ENCODE measurements at regions of chr11 and their contacts with region 1.

Region 1: GRCh38 chr11:128713595-128713994 is 19.7 kb downstream of the FLI1 start:
- DNase-seq: peak; percentile 65
- ATAC-seq: peak; percentile 55
- H3K4me3 ChIP-seq: no peak overlapping the region
- H3K4me3 Mint-ChIP-seq: peak overlapping the region; percentile 69
- H3K27ac ChIP-seq: peak overlapping the region; percentile 54 to 88
- H3K27ac Mint-ChIP-seq: peak overlapping the region; percentile 90
- H3K4me1 ChIP-seq: peaks cover 88% of the 10 kb centered on the region in 2 donors
- H3K4me1 Mint-ChIP-seq: peaks cover 91% of the 10 kb centered on the region
- H3K27me3 ChIP-seq: no peaks in the 10 kb centered on the region
- H3K27me3 Mint-ChIP-seq: no peaks in the 10 kb centered on the region
- CTCF ChIP-seq: no peak

Region 2: DNA sequence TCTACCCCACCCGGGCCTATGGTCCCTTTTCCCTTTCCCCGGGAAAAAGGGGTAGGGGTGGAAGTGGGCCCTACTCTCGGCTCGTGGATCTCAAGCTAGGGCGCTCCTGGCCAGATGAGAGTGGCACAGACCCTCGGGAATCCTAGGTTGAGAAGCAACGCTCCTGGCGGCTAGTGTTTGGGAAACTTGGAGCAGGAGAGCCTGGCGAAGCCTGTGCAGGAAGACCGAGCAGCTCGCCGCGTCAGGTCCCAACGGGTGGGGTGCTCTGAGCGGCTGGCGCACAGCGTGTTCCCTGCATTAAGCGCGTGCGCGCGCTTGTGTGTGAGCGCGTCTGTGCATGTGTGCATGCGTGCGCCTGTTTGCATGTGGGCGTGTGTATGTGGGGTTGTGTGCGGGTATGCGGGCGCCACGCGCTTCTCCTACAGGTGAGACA is 26.8 kb before region 1 on chr11:
- CTCF ChIA-PET with region 1: no interaction called
- POLR2A ChIA-PET with region 1: interaction called, 12 read pairs
- intact Hi-C with region 1: no loop called
- DNase-seq: peak; percentile 71
- ATAC-seq: peak; percentile 72
- H3K4me3 ChIP-seq: peak overlapping the region; percentile 9 to 79 (median 55)
- H3K4me3 Mint-ChIP-seq: peak overlapping the region; percentile 96
- H3K27ac ChIP-seq: no peak overlapping the region
- H3K27ac Mint-ChIP-seq: peak overlapping the region; percentile 32
- H3K4me1 ChIP-seq: peaks cover 36 to 37% of the 10 kb centered on the region in 2 donors
- H3K4me1 Mint-ChIP-seq: peaks cover 48% of the 10 kb centered on the region
- H3K27me3 ChIP-seq: peaks cover 0 to 43% (median 21%) of the 10 kb centered on the region in 4 experiments
- H3K27me3 Mint-ChIP-seq: peaks cover 38% of the 10 kb centered on the region
- CTCF ChIP-seq: no peak

Region 3: GRCh38 chr11:128725630-128726319 is 12.2 kb after region 1 on chr11:
- CTCF ChIA-PET with region 1: interaction called, 11 read pairs
- POLR2A ChIA-PET with region 1: interaction called, 13 read pairs
- intact Hi-C with region 1: loop called (anchors 1 kb)
- DNase-seq: peak; percentile 90
- ATAC-seq: peak; percentile 67
- H3K4me3 ChIP-seq: peak overlapping the region; percentile 27 to 57 (median 43)
- H3K4me3 Mint-ChIP-seq: peak overlapping the region; percentile 93
- H3K27ac ChIP-seq: peak overlapping the region; percentile 70 to 88
- H3K27ac Mint-ChIP-seq: peak overlapping the region; percentile 92
- H3K4me1 ChIP-seq: peaks cover 98 to 100% of the 10 kb centered on the region in 2 donors
- H3K4me1 Mint-ChIP-seq: peaks cover 96% of the 10 kb centered on the region
- H3K27me3 ChIP-seq: no peaks in the 10 kb centered on the region
- H3K27me3 Mint-ChIP-seq: no peaks in the 10 kb centered on the region
- CTCF ChIP-seq: no peak

Region 4: DNA sequence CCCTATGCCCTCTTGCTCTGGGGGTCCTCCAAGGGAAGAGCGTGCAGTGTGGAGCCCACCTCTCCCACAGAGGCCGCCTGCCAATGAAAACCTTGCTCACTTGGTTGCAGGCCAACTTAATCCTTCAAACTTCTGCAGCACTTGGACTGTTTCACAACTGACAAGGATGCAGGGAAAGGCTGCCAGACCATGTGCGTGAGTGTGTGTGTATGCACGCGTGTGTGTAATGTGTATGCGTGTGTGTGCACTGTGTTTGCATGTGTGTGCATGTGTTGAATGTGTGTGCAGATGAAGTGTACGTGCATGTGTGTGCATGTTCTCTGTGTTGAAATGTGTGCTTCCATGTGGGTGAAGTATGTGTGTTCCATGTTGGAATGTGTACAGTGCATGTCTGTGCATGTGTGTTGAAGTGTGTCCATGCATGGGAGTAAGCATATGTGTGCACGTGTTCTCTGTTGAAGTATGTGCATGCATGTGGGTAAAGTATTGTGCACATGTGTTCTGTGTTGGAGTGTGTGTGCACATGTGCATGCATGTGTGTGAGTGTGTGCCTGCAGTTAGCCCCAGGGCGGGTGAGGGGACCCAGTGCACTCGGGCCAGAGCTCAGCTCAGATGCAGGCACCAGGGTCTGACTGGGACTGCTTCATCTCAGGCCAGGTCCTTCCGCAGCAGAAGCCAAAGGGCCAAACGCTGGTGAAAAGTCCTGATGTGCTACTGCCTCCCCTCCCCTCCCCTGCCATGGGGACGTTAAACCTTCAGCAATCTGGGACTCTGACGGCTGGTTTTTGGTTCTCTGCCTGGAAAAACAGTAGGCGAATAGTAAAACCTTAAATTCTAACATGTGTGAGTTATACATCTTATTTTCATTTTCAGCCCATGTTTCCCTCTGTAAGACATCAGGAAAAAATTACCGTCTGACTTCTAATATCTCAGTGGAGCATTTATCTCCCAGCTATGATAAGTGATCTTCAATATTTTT is 52.3 kb after region 1 on chr11:
- CTCF ChIA-PET with region 1: no interaction called
- POLR2A ChIA-PET with region 1: no interaction called
- intact Hi-C with region 1: no loop called
- DNase-seq: no peak
- ATAC-seq: no peak
- H3K4me3 ChIP-seq: no peak overlapping the region
- H3K4me3 Mint-ChIP-seq: no peak overlapping the region
- H3K27ac ChIP-seq: no peak overlapping the region
- H3K27ac Mint-ChIP-seq: no peak overlapping the region
- H3K4me1 ChIP-seq: peaks cover 0 to 3% of the 10 kb centered on the region in 2 donors
- H3K4me1 Mint-ChIP-seq: peaks cover 17% of the 10 kb centered on the region
- H3K27me3 ChIP-seq: no peaks in the 10 kb centered on the region
- H3K27me3 Mint-ChIP-seq: no peaks in the 10 kb centered on the region
- CTCF ChIP-seq: no peak

Measured in B cell (primary cell).